ENCODE measurements at regions of chr7 and their contacts with region 1.

Region 1: DNA sequence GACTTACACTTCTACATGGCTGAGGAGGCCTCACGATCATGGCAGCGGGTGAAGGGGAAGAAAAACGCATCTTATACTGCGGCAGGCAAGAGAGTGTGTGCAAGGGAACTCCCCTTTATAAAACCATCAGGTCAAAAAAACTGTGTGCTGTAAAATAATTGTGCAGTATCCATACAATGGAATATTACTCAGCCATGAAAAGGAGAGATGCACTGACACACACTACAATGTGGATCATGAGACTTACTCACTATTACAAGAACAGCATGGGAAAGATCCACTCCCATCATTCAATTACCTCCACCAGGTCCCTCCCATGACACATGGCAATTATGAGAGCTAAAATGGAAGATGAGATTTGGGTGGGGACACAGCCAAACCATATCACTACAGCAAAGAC is 27.2 kb upstream of the CARD11 start:
- DNase-seq: no peak
- ATAC-seq: no peak
- H3K4me3 ChIP-seq: no peak overlapping the region
- H3K4me3 Mint-ChIP-seq: peak overlapping the region in 1 of 3 donors; percentile 12
- H3K27ac ChIP-seq: no peak overlapping the region
- H3K27ac Mint-ChIP-seq: no peak overlapping the region
- H3K4me1 ChIP-seq: peaks cover 14 to 49% of the 10 kb centered on the region in 2 experiments
- H3K4me1 Mint-ChIP-seq: peaks cover 45 to 71% (median 56%) of the 10 kb centered on the region in 3 donors
- H3K27me3 ChIP-seq: no peaks in the 10 kb centered on the region
- H3K27me3 Mint-ChIP-seq: no peaks in the 10 kb centered on the region

Region 2: GRCh38 chr7:3194501-3195141 is 123.7 kb after region 1 on chr7:
- CTCF ChIA-PET with region 1: no interaction called
- POLR2A ChIA-PET with region 1: no interaction called
- DNase-seq: no peak
- ATAC-seq: no peak
- H3K4me3 ChIP-seq: no peak overlapping the region
- H3K4me3 Mint-ChIP-seq: no peak overlapping the region
- H3K27ac ChIP-seq: no peak overlapping the region
- H3K27ac Mint-ChIP-seq: no peak overlapping the region
- H3K4me1 ChIP-seq: no peaks in the 10 kb centered on the region
- H3K4me1 Mint-ChIP-seq: no peaks in the 10 kb centered on the region
- H3K27me3 ChIP-seq: peaks cover 0 to 17% of the 10 kb centered on the region in 2 experiments
- H3K27me3 Mint-ChIP-seq: peaks cover 0 to 6% of the 10 kb centered on the region in 2 donors

Region 3: DNA sequence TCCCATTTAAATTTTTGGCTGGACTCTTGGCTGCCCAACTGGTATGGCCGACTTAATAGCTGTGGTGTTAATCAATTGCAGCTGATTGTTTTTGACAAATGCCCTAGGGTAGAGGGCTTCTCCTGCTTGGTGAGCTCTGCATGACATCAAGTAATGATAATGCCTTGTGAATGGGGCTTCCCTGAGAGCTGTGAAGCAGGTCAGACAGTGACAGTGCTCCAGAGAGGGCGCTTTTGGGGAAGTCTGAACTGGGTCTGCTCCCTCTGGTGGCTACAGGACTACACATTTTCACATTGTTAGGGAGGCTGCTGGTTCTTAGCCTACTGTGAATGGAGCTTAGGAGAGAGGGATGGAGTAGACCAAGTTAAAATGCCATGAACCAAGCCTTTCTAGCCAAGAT is 328.9 kb after region 1 on chr7:
- CTCF ChIA-PET with region 1: no interaction called
- POLR2A ChIA-PET with region 1: no interaction called
- DNase-seq: peak in 1 of 35 experiments; percentile 24
- ATAC-seq: no peak
- H3K4me3 ChIP-seq: no peak overlapping the region
- H3K4me3 Mint-ChIP-seq: no peak overlapping the region
- H3K27ac ChIP-seq: no peak overlapping the region
- H3K27ac Mint-ChIP-seq: no peak overlapping the region
- H3K4me1 ChIP-seq: no peaks in the 10 kb centered on the region
- H3K4me1 Mint-ChIP-seq: no peaks in the 10 kb centered on the region
- H3K27me3 ChIP-seq: peaks cover 0 to 2% of the 10 kb centered on the region in 2 experiments
- H3K27me3 Mint-ChIP-seq: peaks cover 0 to 15% of the 10 kb centered on the region in 2 donors

Region 4: GRCh38 chr7:3455806-3456595 is 385.1 kb after region 1 on chr7:
- CTCF ChIA-PET with region 1: no interaction called
- POLR2A ChIA-PET with region 1: no interaction called
- DNase-seq: no peak
- ATAC-seq: no peak
- H3K4me3 ChIP-seq: no peak overlapping the region
- H3K4me3 Mint-ChIP-seq: no peak overlapping the region
- H3K27ac ChIP-seq: no peak overlapping the region
- H3K27ac Mint-ChIP-seq: no peak overlapping the region
- H3K4me1 ChIP-seq: peaks cover 4 to 14% of the 10 kb centered on the region in 2 experiments
- H3K4me1 Mint-ChIP-seq: peaks cover 9 to 12% (median 11%) of the 10 kb centered on the region in 3 donors
- H3K27me3 ChIP-seq: peaks cover 0 to 6% of the 10 kb centered on the region in 2 experiments
- H3K27me3 Mint-ChIP-seq: peaks cover 0 to 5% of the 10 kb centered on the region in 2 donors

Region 5: GRCh38 chr7:3482147-3482964 is 411.4 kb after region 1 on chr7:
- CTCF ChIA-PET with region 1: no interaction called
- POLR2A ChIA-PET with region 1: interaction called in 1 of 2 experiments, 10 read pairs
- DNase-seq: no peak
- ATAC-seq: no peak
- H3K4me3 ChIP-seq: no peak overlapping the region
- H3K4me3 Mint-ChIP-seq: no peak overlapping the region
- H3K27ac ChIP-seq: no peak overlapping the region
- H3K27ac Mint-ChIP-seq: no peak overlapping the region
- H3K4me1 ChIP-seq: no peaks in the 10 kb centered on the region
- H3K4me1 Mint-ChIP-seq: peaks cover 0 to 8% (median 7%) of the 10 kb centered on the region in 3 donors
- H3K27me3 ChIP-seq: no peaks in the 10 kb centered on the region
- H3K27me3 Mint-ChIP-seq: no peaks in the 10 kb centered on the region

Measured in T-cell (primary cell).